HepG2 (cell line): ENCODE measurements at regions of chr16 and their contacts with region 1.

Region 1: GRCh38 chr16:80466024-80466987 is 74.5 kb upstream of the DYNLRB2 start:
- DNase-seq: peak; percentile 54
- ATAC-seq: peak; percentile 96
- H3K4me3 ChIP-seq: no peak overlapping the region
- H3K27ac ChIP-seq: no peak overlapping the region
- H3K4me1 ChIP-seq: peaks cover 43% of the 10 kb centered on the region
- H3K27me3 ChIP-seq: peaks cover 0 to 7% of the 10 kb centered on the region in 2 experiments; a peak in 2 of 5 replicates
- CTCF ChIP-seq: peak; percentile 100
- EP300 ChIP-seq: no peak
- POLR2A ChIP-seq: no peak
- RAD21 ChIP-seq: peak; percentile 98

Region 2: DNA sequence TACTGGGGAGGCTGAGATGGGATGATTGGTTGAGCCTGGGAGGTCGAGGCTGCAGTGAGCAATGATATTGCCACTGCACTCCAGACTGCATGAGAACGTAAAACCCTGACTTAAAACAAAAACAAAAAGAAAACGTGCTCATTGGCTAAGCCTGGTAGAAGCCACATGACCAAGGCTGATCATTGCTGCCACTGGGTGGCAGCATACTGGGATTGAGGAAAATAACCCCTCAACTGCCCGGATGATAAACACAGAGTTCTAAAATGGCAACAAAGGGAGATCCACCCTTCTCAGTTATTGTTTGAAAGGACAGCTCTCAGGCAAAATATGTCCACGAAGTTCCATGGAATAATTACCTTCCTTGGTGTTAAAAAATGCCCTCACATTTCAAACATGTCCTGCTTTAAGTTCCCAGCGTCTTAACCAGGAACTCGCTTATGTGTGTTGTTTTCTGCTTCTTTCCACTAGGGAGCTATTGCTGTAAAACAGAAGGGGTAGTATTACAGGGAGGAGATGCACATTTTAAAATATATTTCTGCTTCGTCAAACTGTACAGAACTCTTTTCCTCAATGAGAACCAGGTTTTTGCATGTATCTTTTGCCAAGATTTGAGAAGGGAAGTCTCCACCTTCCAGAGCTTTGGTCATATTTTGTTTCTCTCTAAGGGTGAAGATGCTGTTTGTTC is 1541.1 kb before region 1 on chr16:
- CTCF ChIA-PET with region 1: no interaction called
- POLR2A ChIA-PET with region 1: no interaction called
- in situ Hi-C with region 1: no loop called
- intact Hi-C with region 1: loop called (anchors 2 kb)
- DNase-seq: peak; percentile 24
- ATAC-seq: peak; percentile 95
- H3K4me3 ChIP-seq: no peak overlapping the region
- H3K27ac ChIP-seq: no peak overlapping the region
- H3K4me1 ChIP-seq: peaks cover 6% of the 10 kb centered on the region; the same call in 1 of the 2 replicates
- H3K27me3 ChIP-seq: no peaks in the 10 kb centered on the region
- CTCF ChIP-seq: peak; percentile 63
- EP300 ChIP-seq: no peak
- POLR2A ChIP-seq: no peak
- RAD21 ChIP-seq: peak; percentile 59; the same call in 1 of the 2 replicates

Region 3: GRCh38 chr16:79770244-79771064 is 695.9 kb before region 1 on chr16:
- CTCF ChIA-PET with region 1: interaction called, 4 read pairs
- POLR2A ChIA-PET with region 1: no interaction called
- in situ Hi-C with region 1: no loop called
- intact Hi-C with region 1: loop called (anchors 1 kb)
- DNase-seq: peak; percentile 63
- ATAC-seq: peak; percentile 98
- H3K4me3 ChIP-seq: peak overlapping the region; percentile 58 to 71 (median 62)
- H3K27ac ChIP-seq: no peak overlapping the region
- H3K4me1 ChIP-seq: peaks cover 33% of the 10 kb centered on the region
- H3K27me3 ChIP-seq: peaks cover 0 to 24% of the 10 kb centered on the region in 2 experiments; a peak in 2 of 5 replicates
- CTCF ChIP-seq: no peak
- EP300 ChIP-seq: peak in 1 of 2 experiments; percentile 66; a peak in 2 of 4 replicates
- POLR2A ChIP-seq: no peak
- RAD21 ChIP-seq: no peak

Region 4: GRCh38 chr16:80142281-80142680 is 324.0 kb before region 1 on chr16:
- CTCF ChIA-PET with region 1: no interaction called
- POLR2A ChIA-PET with region 1: no interaction called
- in situ Hi-C with region 1: no loop called
- intact Hi-C with region 1: loop called (anchors 2 kb)
- DNase-seq: no peak
- ATAC-seq: no peak
- H3K4me3 ChIP-seq: no peak overlapping the region
- H3K27ac ChIP-seq: no peak overlapping the region
- H3K4me1 ChIP-seq: peaks cover 24% of the 10 kb centered on the region
- H3K27me3 ChIP-seq: no peaks in the 10 kb centered on the region
- CTCF ChIP-seq: no peak
- EP300 ChIP-seq: no peak
- POLR2A ChIP-seq: no peak
- RAD21 ChIP-seq: no peak

Region 5: DNA sequence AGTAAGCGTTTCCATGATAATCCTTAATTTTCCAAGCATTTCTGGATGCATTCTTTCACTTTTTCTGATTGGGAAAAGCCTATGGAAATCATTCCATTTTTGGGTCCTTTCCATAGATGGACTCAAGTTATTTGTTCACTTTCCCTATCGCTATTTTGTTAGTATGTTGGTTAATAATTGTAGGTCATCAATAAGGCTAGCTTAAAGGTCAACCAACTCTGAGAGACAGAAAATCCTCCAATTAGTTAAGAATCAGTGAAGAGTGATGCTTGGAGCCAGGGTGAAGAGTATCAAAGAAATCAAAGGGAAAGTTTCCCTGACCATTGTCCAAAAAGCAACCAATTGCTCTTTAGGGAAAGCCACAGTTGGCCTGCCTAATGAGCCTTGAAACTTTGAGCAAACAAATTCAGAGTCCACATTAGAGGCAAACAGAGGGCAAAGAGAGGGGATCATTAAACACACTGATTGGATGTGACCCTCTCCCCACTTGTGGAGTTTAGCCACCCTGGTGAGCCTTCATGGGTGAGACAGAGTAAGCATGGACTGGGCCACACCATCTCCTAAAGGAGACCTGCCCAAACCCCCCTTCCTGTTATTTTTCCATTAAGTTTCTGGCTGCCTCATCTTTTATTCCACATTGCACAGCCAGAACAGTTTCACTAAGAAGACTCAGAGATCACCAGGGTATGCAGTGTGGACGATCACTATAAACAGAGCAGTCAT is 58.9 kb before region 1 on chr16:
- CTCF ChIA-PET with region 1: no interaction called
- POLR2A ChIA-PET with region 1: no interaction called
- in situ Hi-C with region 1: no loop called
- intact Hi-C with region 1: loop called (anchors 5 kb)
- DNase-seq: peak; percentile 92
- ATAC-seq: peak; percentile 99
- H3K4me3 ChIP-seq: peak overlapping the region in 2 of 3 experiments; percentile 8 to 14; a peak in 1 of 6 replicates
- H3K27ac ChIP-seq: peak overlapping the region; percentile 85
- H3K4me1 ChIP-seq: peaks cover 58% of the 10 kb centered on the region
- H3K27me3 ChIP-seq: no peaks in the 10 kb centered on the region
- CTCF ChIP-seq: 0 out of 2 replicates have a peak, but pooled peaks have one; percentile 11
- EP300 ChIP-seq: peak in 1 of 2 experiments; percentile 87; a peak in 2 of 4 replicates
- POLR2A ChIP-seq: no peak
- RAD21 ChIP-seq: no peak